GM10248 (cell line): ENCODE measurements at regions of chr11 and their contacts with region 1.

Region 1: DNA sequence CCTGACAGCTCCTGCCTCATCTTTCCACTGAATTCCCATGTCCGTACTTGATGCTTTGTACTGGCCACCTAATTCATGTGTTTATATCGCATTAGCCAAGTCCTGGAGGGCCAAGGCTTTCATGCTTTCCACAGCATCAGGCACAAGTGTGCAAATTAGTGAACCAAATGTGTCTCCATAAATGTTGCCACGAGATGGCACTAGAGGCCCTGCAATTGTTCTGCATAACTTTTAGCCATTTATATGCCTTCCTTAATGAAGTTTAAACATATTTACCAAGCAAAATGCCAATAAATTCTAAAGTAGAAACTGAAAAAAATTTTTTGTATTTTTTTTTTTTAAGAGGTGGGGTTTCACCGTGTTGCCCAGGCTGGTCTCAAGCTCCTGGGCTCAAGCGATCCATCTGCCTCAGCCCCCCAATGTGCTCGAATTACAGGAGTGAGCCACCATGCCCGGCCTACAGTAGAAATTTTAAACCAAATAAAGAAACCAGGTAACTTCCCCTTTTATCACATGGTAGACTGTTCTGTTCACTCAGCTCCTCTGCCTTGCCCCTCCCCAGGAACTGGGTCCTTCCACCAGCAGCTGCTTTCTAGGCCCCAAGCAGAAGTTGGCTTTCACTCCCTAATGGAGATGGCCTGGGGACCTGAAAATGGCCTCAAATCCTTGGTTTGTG is 20.8 kb upstream of the IL18BP start:
- DNase-seq: peak; percentile 59
- CTCF ChIP-seq: peak; percentile 73

Region 2: DNA sequence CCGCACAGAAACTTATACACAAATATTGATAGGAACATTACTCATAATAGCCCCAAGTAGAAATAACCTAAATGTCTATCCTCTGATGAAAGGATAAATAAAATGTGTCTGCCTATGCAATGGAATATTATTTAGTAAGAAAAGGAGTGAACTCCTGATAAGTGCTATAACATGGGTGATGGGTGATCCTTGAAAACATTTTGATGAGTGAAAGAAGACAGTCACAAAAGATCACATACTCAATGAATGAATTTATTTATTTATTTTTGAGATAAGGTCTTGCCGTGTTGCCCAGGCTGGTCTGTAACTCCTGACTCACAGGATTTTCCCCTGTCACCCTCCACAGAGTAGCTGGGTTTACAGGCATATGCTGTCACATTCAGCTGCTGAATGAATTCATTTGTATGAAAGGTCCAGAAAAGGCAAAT is 31.7 kb before region 1 on chr11:
- CTCF ChIA-PET with region 1: interaction called, 22 read pairs
- POLR2A ChIA-PET with region 1: no interaction called
- DNase-seq: no peak
- CTCF ChIP-seq: no peak

Region 3: DNA sequence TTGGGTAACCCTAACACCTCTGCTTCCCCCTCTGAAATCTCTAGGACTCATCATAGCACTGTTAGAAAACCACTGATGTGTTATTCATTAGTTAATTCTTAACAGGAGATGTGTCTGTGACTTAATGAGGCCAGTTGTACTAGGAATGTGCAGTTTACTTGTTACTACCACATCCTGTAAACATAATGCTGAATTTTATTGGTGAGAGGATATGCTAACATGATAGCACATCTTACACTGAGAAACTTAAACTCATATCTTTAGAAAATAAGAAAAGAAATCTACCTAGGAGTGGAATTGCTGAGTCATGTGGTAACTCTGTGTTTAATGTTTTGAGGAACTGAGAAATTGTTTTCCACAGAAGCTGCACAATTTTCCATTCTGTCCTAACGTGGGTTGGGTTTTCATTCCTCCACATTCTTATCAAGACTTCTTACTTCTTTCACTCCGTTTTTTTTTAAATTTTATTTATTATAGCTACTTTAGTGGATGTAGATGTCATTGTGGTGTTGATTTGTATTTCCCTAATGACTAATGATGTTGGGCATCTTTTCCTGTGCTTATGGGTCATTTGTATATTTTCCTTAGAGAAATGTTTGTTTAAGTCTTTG is 15.3 kb before region 1 on chr11:
- CTCF ChIA-PET with region 1: interaction called, 33 read pairs
- POLR2A ChIA-PET with region 1: no interaction called
- DNase-seq: peak; percentile 61
- CTCF ChIP-seq: no peak

Region 4: GRCh38 chr11:71998662-71999310 is 20.9 kb after region 1 on chr11 and contains the start of gene IL18BP:
- CTCF ChIA-PET with region 1: interaction called, 50 read pairs
- POLR2A ChIA-PET with region 1: interaction called, 3 read pairs
- DNase-seq: peak; percentile 65
- CTCF ChIP-seq: no peak

Region 5: DNA sequence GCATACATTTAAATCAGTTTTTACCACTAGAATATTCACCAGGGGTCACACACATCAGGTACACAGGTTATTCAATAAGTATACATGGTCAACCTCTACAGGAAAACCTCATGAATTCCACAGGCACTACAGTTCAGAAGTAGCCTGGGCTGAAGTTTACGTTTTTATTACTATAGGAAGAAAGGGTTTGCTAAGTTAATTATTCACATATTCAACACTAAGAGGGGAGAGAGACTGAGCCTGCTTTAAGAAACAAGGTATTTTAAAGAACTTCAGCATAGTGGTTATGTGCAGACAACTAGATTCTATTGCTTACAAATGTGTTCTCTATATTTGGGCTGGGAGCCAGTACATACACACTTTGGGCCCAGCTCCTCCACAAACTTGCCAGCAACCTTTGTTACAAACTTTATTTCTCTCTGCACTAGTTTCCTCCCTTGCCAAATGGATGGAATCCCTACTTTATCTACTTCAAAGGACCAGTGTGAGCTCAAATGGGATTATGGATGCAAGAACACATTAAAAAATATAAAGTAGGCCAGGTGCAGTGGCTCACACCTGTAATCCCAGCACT is 52.7 kb after region 1 on chr11:
- CTCF ChIA-PET with region 1: interaction called, 18 read pairs
- POLR2A ChIA-PET with region 1: interaction called, 3 read pairs
- DNase-seq: no peak
- CTCF ChIP-seq: no peak

Region 6: GRCh38 chr11:72058416-72059034 is 80.6 kb after region 1 on chr11:
- CTCF ChIA-PET with region 1: no interaction called
- POLR2A ChIA-PET with region 1: no interaction called
- DNase-seq: no peak
- CTCF ChIP-seq: no peak

Region 7: DNA sequence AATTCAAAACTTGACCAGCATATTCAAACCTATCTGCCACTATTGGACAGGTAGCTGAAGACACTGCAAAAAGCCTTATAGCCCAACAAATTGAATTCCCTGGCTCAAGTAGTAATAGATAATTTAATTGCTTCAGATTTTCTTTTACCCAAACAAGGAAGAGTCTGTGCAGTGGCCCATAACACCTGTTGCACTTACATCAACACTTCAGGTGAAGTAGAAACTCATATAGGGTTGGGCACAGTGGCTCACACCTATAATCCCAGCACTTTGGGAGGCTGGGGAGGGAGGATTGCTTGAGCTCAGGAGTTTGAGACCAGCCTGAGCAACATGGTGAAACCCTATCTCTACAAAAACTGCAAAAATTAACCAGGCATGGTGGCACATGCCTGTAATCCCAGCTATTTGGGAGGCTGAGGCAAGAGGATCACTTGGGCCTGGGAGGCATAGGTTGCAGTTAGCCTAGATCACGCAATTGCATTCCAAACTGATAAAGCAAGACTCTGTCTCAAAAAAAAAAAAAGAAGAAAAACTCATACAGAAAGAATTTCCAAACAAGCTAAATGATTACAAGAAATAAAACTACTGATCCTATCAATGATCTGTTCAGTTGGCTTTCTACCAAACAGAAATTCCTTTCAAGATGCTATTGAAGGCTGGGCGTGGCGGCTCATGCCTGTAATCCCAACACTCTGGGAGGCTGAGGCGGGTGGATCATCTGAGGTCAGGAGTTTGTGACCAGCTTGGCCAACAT is 167.1 kb after region 1 on chr11:
- CTCF ChIA-PET with region 1: interaction called, 15 read pairs
- POLR2A ChIA-PET with region 1: no interaction called
- DNase-seq: no peak
- CTCF ChIP-seq: no peak